ENCODE measurements at regions of chr3 and their contacts with region 1.

Region 1: GRCh38 chr3:149898771-149899170 is 71.9 kb downstream of the PFN2 start:
- DNase-seq: no peak
- H3K4me3 ChIP-seq: no peak overlapping the region
- H3K27ac ChIP-seq: peak overlapping the region in 1 of 2 donors; percentile 73
- H3K4me1 ChIP-seq: peaks cover 3 to 29% of the 10 kb centered on the region in 2 donors
- H3K27me3 ChIP-seq: no peaks in the 10 kb centered on the region
- CTCF ChIP-seq: no peak

Region 2: GRCh38 chr3:151630938-151631441 is 1732.2 kb after region 1 on chr3:
- intact Hi-C with region 1: loop called (anchors 5 kb)
- DNase-seq: no peak
- H3K4me3 ChIP-seq: no peak overlapping the region
- H3K27ac ChIP-seq: peak overlapping the region; percentile 7 to 51
- H3K4me1 ChIP-seq: peaks cover 0 to 11% of the 10 kb centered on the region in 2 donors
- H3K27me3 ChIP-seq: no peaks in the 10 kb centered on the region
- CTCF ChIP-seq: no peak

Measured in ascending aorta (tissue), 2 donors.